Natural killer cell (primary cell): ENCODE measurements at regions of chr18 and their contacts with region 1.

Region 1: GRCh38 chr18:22703883-22704585 is 229.1 kb upstream of the RBBP8 start:
- DNase-seq: peak in 1 of 2 donors; percentile 57
- ATAC-seq: peak; percentile 53 to 73 (median 60)
- H3K4me3 ChIP-seq: no peak overlapping the region
- H3K4me3 Mint-ChIP-seq: no peak overlapping the region
- H3K27ac ChIP-seq: no peak overlapping the region
- H3K27ac Mint-ChIP-seq: no peak overlapping the region
- H3K4me1 ChIP-seq: no peaks in the 10 kb centered on the region
- H3K4me1 Mint-ChIP-seq: no peaks in the 10 kb centered on the region
- H3K27me3 ChIP-seq: no peaks in the 10 kb centered on the region
- H3K27me3 Mint-ChIP-seq: peaks cover 4 to 23% of the 10 kb centered on the region in 2 donors
- CTCF ChIP-seq: peak; percentile 81

Region 2: DNA sequence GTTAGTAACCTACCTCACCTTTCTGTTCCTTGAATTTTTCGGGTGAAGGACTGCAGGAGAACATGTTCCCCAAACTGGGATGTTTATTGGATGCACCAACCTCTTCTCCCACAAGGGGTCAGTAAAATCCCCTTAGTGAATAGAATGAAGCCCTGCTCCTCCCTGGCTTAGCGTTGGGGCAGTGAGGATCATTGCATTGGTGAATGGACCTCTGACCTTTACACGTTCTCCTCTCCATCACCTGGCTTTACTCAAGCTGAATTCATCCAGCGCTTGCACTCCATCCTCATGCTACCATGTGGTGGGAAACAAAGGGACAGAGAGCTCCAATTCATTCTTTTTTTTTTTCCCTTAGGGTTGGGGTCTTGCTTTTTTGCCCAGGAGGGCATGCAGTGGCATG is 806.2 kb before region 1 on chr18:
- intact Hi-C with region 1: loop called (anchors 1 kb)
- DNase-seq: peak in 1 of 2 donors; percentile 39
- ATAC-seq: peak in 2 of 3 donors; percentile 53 to 65
- H3K4me3 ChIP-seq: no peak overlapping the region
- H3K4me3 Mint-ChIP-seq: no peak overlapping the region
- H3K27ac ChIP-seq: no peak overlapping the region
- H3K27ac Mint-ChIP-seq: no peak overlapping the region
- H3K4me1 ChIP-seq: no peaks in the 10 kb centered on the region
- H3K4me1 Mint-ChIP-seq: peaks cover 6 to 7% of the 10 kb centered on the region in 2 donors
- H3K27me3 ChIP-seq: no peaks in the 10 kb centered on the region
- H3K27me3 Mint-ChIP-seq: peaks cover 8 to 12% of the 10 kb centered on the region in 2 donors
- CTCF ChIP-seq: peak; percentile 56

Region 3: DNA sequence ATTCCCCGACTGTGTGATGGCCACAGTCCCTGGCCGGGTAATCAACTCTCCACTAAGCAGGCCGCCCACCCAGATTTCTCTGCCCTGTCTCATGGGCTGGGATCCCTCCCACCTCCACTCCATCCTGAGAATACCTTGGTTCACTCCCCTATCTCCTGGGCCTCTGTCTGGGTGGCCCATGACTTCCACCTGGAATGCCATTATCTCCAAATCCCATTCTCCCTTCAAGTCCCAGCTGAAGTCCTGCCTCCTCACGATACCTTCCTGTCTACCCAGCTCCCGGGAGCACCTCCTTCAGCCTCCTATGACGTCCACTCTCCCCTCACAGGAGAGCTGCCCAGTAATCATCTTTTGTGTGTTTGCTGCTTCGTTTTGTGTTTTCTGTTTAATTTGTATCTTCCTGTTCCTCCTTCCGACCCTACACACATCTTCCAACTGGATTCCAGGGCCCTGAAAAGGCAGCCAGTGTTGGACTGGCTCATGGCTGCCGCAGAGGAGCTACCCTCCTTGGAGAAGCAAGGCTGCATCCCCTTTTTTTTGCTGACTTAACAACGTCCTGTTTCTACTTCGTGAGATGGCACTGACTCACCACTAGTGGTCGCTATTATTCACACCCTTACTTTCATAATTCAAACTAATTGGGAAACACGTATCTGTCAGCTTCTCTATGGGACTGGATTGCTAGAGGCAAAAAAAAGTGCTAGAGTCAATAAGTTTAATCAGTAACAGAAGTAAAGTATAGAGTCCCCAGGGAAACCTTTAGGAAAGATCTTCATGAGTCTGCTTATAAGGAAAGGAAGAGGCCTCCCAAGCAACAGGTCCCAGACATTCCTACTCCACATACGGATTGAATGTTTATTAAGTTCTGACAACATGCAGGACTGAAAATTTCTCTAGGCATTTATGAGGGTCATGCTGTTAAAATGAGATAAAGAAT is 706.6 kb before region 1 on chr18:
- intact Hi-C with region 1: loop called (anchors 2 kb)
- DNase-seq: peak in 1 of 2 donors; percentile 55
- ATAC-seq: peak; percentile 73 to 88 (median 77)
- H3K4me3 ChIP-seq: no peak overlapping the region
- H3K4me3 Mint-ChIP-seq: no peak overlapping the region
- H3K27ac ChIP-seq: no peak overlapping the region
- H3K27ac Mint-ChIP-seq: peak overlapping the region in 1 of 2 donors; percentile 3
- H3K4me1 ChIP-seq: no peaks in the 10 kb centered on the region
- H3K4me1 Mint-ChIP-seq: peaks cover 5 to 7% of the 10 kb centered on the region in 2 donors
- H3K27me3 ChIP-seq: no peaks in the 10 kb centered on the region
- H3K27me3 Mint-ChIP-seq: peaks cover 5 to 19% of the 10 kb centered on the region in 2 donors
- CTCF ChIP-seq: peak; percentile 83

Region 4: DNA sequence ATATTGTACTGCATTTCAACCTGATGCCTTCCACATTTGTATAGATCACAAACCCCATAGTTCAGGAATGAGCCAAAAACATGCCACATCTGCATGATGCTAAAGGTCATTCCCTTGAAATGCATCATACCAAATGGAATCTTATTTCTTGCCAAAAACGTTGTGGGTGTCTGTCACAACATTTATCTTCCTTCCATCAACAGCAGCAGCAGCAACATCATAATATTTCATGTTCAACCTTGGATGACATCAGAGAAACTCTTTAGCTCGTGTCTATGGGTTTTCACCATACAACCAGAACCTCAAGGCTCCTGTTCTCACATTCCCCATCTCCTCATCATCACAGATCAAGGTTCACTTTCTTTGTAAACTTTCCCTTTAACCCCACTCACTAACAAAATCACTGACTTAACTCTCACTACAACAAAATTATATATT is 65.0 kb before region 1 on chr18:
- intact Hi-C with region 1: no loop called
- DNase-seq: no peak
- ATAC-seq: no peak
- H3K4me3 ChIP-seq: no peak overlapping the region
- H3K4me3 Mint-ChIP-seq: no peak overlapping the region
- H3K27ac ChIP-seq: no peak overlapping the region
- H3K27ac Mint-ChIP-seq: no peak overlapping the region
- H3K4me1 ChIP-seq: no peaks in the 10 kb centered on the region
- H3K4me1 Mint-ChIP-seq: no peaks in the 10 kb centered on the region
- H3K27me3 ChIP-seq: no peaks in the 10 kb centered on the region
- H3K27me3 Mint-ChIP-seq: peaks cover 12 to 17% of the 10 kb centered on the region in 2 donors
- CTCF ChIP-seq: no peak

Region 5: GRCh38 chr18:22723773-22724172 is 19.7 kb after region 1 on chr18:
- intact Hi-C with region 1: no loop called
- DNase-seq: no peak
- ATAC-seq: no peak
- H3K4me3 ChIP-seq: no peak overlapping the region
- H3K4me3 Mint-ChIP-seq: no peak overlapping the region
- H3K27ac ChIP-seq: no peak overlapping the region
- H3K27ac Mint-ChIP-seq: no peak overlapping the region
- H3K4me1 ChIP-seq: no peaks in the 10 kb centered on the region
- H3K4me1 Mint-ChIP-seq: no peaks in the 10 kb centered on the region
- H3K27me3 ChIP-seq: no peaks in the 10 kb centered on the region
- H3K27me3 Mint-ChIP-seq: peaks cover 5 to 7% of the 10 kb centered on the region in 2 donors
- CTCF ChIP-seq: no peak

Region 6: GRCh38 chr18:22914633-22915032 is 210.6 kb after region 1 on chr18:
- intact Hi-C with region 1: no loop called
- DNase-seq: no peak
- ATAC-seq: no peak
- H3K4me3 ChIP-seq: no peak overlapping the region
- H3K4me3 Mint-ChIP-seq: no peak overlapping the region
- H3K27ac ChIP-seq: no peak overlapping the region
- H3K27ac Mint-ChIP-seq: no peak overlapping the region
- H3K4me1 ChIP-seq: no peaks in the 10 kb centered on the region
- H3K4me1 Mint-ChIP-seq: no peaks in the 10 kb centered on the region
- H3K27me3 ChIP-seq: no peaks in the 10 kb centered on the region
- H3K27me3 Mint-ChIP-seq: no peaks in the 10 kb centered on the region
- CTCF ChIP-seq: no peak

Region 7: GRCh38 chr18:22930089-22930713 is 226.2 kb after region 1 on chr18:
- intact Hi-C with region 1: no loop called
- DNase-seq: peak; percentile 62 to 87
- ATAC-seq: peak; percentile 40 to 64 (median 43)
- H3K4me3 ChIP-seq: no peak overlapping the region
- H3K4me3 Mint-ChIP-seq: no peak overlapping the region
- H3K27ac ChIP-seq: no peak overlapping the region
- H3K27ac Mint-ChIP-seq: no peak overlapping the region
- H3K4me1 ChIP-seq: peaks cover 8% of the 10 kb centered on the region
- H3K4me1 Mint-ChIP-seq: peaks cover 14 to 15% of the 10 kb centered on the region in 2 donors
- H3K27me3 ChIP-seq: no peaks in the 10 kb centered on the region
- H3K27me3 Mint-ChIP-seq: no peaks in the 10 kb centered on the region
- CTCF ChIP-seq: peak; percentile 87